ENCODE measurements at regions of chr9 and their contacts with region 1.

Region 1: DNA sequence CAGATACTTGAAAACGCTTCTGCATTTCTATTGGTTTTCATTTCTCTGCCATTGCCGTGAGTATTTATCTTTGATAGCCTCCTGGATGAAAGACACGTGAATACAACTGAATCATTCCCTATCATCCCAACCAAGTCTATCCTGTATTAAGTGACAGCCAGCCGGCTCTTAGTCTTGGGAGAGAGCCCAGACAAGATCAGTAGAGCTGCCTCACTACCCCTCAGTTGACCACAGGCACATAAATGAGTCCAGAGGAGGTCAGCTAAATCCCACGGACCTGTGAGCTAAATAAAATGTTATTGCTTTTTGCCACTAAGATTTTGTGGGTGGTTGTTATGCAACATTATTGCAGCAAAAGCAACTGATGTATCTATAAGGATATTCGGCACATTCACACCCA is 639.0 kb upstream of the ACO1 start:
- DNase-seq: no peak
- H3K4me3 Mint-ChIP-seq: no peak overlapping the region
- H3K27ac Mint-ChIP-seq: no peak overlapping the region
- H3K4me1 Mint-ChIP-seq: no peaks in the 10 kb centered on the region
- H3K27me3 Mint-ChIP-seq: no peaks in the 10 kb centered on the region

Region 2: DNA sequence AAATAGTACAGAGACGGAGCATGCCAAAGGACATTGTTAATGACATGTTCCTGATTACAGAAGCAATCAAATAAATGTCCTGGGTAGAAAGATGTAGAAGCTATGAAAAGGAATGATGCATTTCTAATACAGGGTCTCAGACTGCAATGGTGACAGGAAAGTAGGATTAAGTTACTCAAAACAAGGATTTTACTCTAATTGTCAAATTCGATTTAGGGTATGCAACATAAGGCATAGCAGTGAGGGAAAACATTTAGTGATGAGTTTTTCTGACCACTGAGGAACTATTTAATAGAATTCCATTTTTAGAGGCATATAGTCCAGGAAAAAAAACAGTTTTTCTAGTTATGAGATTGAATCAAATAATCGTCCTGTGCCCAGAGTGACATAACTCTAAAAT is 76.2 kb before region 1 on chr9:
- intact Hi-C with region 1: loop called (anchors 10 kb)
- DNase-seq: no peak
- H3K4me3 Mint-ChIP-seq: no peak overlapping the region
- H3K27ac Mint-ChIP-seq: no peak overlapping the region
- H3K4me1 Mint-ChIP-seq: no peaks in the 10 kb centered on the region
- H3K27me3 Mint-ChIP-seq: no peaks in the 10 kb centered on the region